ENCODE measurements at regions of chr6 and their contacts with region 1.

Region 1: GRCh38 chr6:61809004-61809595 is 476.9 kb downstream of the KHDRBS2 start:
- DNase-seq: no peak
- H3K4me3 ChIP-seq: no peak overlapping the region
- H3K27ac ChIP-seq: no peak overlapping the region
- H3K4me1 ChIP-seq: no peaks in the 10 kb centered on the region
- H3K27me3 ChIP-seq: no peaks in the 10 kb centered on the region
- CTCF ChIP-seq: peak in 8 of 11 experiments; percentile 28 to 54 (median 40)
- POLR2A ChIP-seq: no peak

Region 2: DNA sequence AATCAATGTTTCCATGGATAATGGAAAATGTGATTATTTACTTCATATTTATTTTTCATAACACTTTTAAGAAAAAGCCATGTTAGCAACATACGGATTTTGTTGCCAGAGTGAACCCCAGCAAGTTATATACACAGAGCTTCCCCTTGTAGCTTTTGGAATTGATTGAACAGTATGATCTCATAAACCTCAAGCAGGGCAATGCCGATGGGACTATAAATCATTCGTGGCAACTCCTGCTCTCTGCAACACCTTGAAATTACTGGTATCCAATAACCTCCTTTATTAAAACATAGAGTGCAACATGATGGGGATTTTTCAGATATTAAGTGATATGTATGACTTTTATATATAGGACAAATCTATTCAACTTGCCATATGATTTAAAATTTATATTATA is 48.4 kb after region 1 on chr6:
- intact Hi-C with region 1: no loop called
- DNase-seq: no peak
- H3K4me3 ChIP-seq: no peak overlapping the region
- H3K27ac ChIP-seq: no peak overlapping the region
- H3K4me1 ChIP-seq: no peaks in the 10 kb centered on the region
- H3K27me3 ChIP-seq: no peaks in the 10 kb centered on the region
- CTCF ChIP-seq: no peak
- POLR2A ChIP-seq: no peak

Region 3: GRCh38 chr6:61935242-61935846 is 126.2 kb after region 1 on chr6:
- intact Hi-C with region 1: no loop called
- DNase-seq: no peak
- H3K4me3 ChIP-seq: no peak overlapping the region
- H3K27ac ChIP-seq: no peak overlapping the region
- H3K4me1 ChIP-seq: no peaks in the 10 kb centered on the region
- H3K27me3 ChIP-seq: no peaks in the 10 kb centered on the region
- CTCF ChIP-seq: no peak
- POLR2A ChIP-seq: no peak

Region 4: DNA sequence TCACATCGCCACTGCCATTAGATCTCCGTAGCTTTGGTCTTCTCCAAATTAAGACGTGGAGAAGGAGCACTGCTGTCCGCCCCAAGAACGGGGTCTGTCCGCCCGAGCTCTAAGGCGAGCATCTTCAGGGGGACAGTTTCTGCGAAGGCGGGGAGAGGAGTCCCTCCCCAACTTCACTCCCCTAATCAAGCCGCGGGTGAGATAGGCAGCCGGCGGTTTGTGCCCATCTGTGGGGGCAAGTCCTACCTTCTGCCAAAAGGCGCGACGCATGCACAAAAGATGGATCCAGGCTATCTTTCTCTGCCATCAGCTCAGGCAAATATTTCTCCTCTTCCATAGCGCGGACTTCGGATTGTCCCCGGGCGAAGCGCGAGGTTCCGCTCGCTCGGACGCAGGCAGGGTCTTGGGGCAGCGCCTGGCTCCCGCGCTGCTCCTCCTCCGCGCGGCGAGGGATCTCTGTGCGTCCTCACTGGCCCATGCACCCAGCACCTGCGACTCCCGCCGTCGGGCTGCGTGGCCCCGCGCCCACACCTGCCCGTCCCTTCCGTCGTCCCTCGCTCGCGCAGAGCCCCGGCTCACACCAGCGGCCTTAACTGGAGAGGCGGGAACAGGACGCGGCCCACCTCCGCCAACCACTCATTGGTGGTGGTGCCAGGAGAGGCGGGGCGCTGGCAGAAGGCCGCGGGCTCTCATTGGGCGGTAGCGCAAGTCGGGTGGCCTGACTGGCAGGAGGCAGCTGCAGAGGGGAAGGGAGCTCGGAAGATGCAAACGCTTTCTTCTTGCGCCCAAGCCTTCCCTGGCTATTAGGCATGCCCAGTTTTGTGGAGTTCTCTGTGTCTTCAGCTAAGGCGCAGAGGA is 476.7 kb after region 1 on chr6 and contains the start of gene KHDRBS2:
- intact Hi-C with region 1: loop called (anchors 10 kb)
- DNase-seq: peak; percentile 95
- H3K4me3 ChIP-seq: peak within 1 kb of the TSS; percentile 41 to 85 (median 60)
- H3K27ac ChIP-seq: peak within 1 kb of the TSS in 6 of 8 donors; percentile 25 to 86 (median 78)
- H3K4me1 ChIP-seq: peaks cover 0 to 41% (median 16%) of the 10 kb centered on the region in 6 donors
- H3K27me3 ChIP-seq: peaks cover 0 to 21% (median 0%) of the 10 kb centered on the region in 7 donors
- CTCF ChIP-seq: no peak
- POLR2A ChIP-seq: no peak
- total RNA-seq, gene KHDRBS2: 3.1 to 11.7 (median 4.9) TPM